RWPE1 (cell line): ENCODE measurements at regions of chr5 and their contacts with region 1.

Region 1: GRCh38 chr5:41325074-41325473 is 111.7 kb upstream of the C6 start:
- DNase-seq: no peak
- H3K27ac ChIP-seq: no peak overlapping the region
- CTCF ChIP-seq: no peak

Region 2: DNA sequence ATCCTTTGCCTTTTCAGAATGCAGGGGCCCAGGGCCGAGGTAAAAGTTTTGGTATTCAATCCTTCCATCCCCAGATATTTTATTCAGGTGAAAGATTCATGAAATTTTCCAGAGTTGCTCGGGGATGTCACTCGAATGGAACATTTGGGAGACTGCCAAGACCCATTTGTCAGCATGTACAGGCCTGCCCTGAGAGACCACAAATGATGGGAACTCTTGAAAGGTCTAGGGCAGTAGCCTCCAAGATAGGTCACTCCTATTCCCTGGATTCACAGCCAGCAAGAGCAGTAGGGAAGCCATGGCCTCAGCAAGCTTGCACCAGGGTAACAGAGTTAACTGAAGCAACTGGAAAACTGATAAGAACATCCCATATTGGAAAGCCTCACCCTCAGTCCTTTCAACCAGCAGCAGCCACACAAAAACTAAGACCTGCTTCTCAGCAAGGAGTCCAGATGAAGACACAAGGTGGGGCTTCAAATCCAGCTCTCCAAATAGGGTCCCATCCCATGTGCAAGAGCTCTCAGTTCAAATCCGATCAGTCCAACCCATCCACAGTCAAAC is 471.4 kb before region 1 on chr5:
- CTCF ChIA-PET with region 1: no interaction called
- POLR2A ChIA-PET with region 1: interaction called, 11 read pairs
- DNase-seq: no peak
- H3K27ac ChIP-seq: no peak overlapping the region
- CTCF ChIP-seq: no peak

Region 3: GRCh38 chr5:41289970-41290464 is 35.1 kb before region 1 on chr5:
- CTCF ChIA-PET with region 1: no interaction called
- POLR2A ChIA-PET with region 1: no interaction called
- DNase-seq: no peak
- H3K27ac ChIP-seq: no peak overlapping the region
- CTCF ChIP-seq: no peak

Region 4: GRCh38 chr5:41374631-41375030 is 49.6 kb after region 1 on chr5:
- CTCF ChIA-PET with region 1: no interaction called
- POLR2A ChIA-PET with region 1: no interaction called
- DNase-seq: no peak
- H3K27ac ChIP-seq: no peak overlapping the region
- CTCF ChIP-seq: no peak